Common myeloid progenitor, CD34-positive (primary cell): ENCODE measurements at regions of chr9 and their contacts with region 1.

Region 1: DNA sequence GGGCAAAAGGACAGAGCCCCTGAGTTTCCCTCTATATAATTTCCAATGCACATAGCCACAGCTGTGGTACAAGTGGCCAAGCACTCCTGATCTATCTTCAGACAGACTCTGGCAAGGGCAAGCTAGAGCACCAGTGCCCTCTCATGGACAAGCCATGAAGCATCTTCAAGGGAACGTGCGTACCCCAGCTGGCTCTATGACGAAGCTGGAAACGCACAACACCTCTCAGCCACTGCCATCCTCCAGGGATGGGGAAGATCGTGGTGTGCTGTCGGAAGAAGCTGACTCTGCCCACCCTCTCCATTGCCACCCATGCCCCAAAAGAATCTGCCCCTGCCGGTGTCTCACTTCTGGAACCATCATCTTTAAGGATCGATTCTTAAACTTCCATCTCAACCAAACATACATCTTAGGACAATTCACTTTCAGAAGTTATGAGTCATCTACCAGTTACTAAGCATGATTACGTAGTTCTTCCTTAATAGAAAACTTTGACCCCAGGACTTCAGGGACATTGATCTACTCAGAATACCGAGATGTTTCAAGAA is 482.9 kb downstream of the AGTPBP1 start:
- DNase-seq: peak; percentile 52 to 69 (median 69)
- H3K4me3 ChIP-seq: no peak overlapping the region
- H3K27ac ChIP-seq: no peak overlapping the region
- H3K4me1 ChIP-seq: peaks cover 0 to 11% (median 2%) of the 10 kb centered on the region in 4 experiments
- H3K27me3 ChIP-seq: peaks cover 0 to 14% (median 2%) of the 10 kb centered on the region in 5 experiments

Region 2: GRCh38 chr9:85248508-85249312 is 10.2 kb before region 1 on chr9:
- CTCF ChIA-PET with region 1: interaction called, 11 read pairs
- POLR2A ChIA-PET with region 1: no interaction called
- DNase-seq: no peak
- H3K4me3 ChIP-seq: no peak overlapping the region
- H3K27ac ChIP-seq: no peak overlapping the region
- H3K4me1 ChIP-seq: no peaks in the 10 kb centered on the region
- H3K27me3 ChIP-seq: peaks cover 0 to 4% (median 0%) of the 10 kb centered on the region in 5 experiments